ENCODE measurements at regions of chr4 and their contacts with region 1.

Region 1: DNA sequence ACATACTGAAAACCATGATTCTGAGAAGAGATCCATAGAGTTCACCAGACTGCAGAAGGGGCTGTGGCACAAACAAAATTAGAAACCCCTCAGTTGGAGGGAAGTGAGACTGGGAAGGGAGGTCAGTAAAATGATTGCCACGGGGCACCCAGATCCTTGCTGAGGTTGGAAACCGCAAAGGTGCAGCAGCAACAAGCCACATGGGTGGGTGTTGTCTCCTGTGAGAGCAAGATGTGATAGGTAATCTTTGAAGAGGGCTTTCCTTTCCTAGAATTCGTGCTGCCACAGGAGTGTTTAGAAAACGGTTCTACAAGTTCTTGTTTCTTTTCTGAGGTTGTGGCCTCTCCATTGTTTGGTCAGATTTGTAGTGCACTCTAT is 85.5 kb downstream of the NFKB1 start:
- DNase-seq: peak; percentile 69
- ATAC-seq: peak; percentile 82
- H3K4me3 Mint-ChIP-seq: peak overlapping the region; percentile 65
- H3K27ac Mint-ChIP-seq: peak overlapping the region; percentile 91
- H3K4me1 Mint-ChIP-seq: peaks cover 69% of the 10 kb centered on the region
- H3K27me3 Mint-ChIP-seq: no peaks in the 10 kb centered on the region

Region 2: DNA sequence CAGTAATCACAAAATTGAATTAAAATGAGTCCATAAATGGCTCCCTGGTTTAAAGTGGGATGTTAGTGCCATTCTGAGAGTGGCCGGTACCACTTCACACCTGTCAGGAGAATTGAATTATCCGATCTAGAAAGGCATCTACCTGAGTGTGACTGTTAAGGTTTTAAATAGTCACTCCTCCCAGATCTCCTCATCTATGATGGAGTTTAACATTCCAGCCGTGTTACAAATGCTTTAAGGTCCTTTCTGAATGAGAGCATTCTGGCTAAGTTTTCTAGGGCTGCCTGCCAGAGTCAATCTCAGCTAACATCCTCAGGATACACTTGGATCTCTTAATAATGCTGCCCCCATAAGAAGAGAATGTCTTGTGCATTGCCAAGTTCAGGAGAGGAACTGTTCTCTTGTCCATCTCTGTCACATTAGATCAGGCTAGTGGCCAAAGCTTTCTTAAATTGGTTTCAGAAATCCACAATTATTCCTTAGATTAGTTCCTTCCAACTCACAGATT is 472.5 kb before region 1 on chr4:
- POLR2A ChIA-PET with region 1: no interaction called
- DNase-seq: no peak
- ATAC-seq: no peak
- H3K4me3 Mint-ChIP-seq: no peak overlapping the region
- H3K27ac Mint-ChIP-seq: no peak overlapping the region
- H3K4me1 Mint-ChIP-seq: no peaks in the 10 kb centered on the region
- H3K27me3 Mint-ChIP-seq: peaks cover 4% of the 10 kb centered on the region

Region 3: GRCh38 chr4:102598086-102598761 is 11.6 kb after region 1 on chr4:
- POLR2A ChIA-PET with region 1: interaction called, 26 read pairs
- DNase-seq: no peak
- ATAC-seq: peak; percentile 90
- H3K4me3 Mint-ChIP-seq: peak overlapping the region; percentile 52
- H3K27ac Mint-ChIP-seq: peak overlapping the region; percentile 86
- H3K4me1 Mint-ChIP-seq: peaks cover 72% of the 10 kb centered on the region
- H3K27me3 Mint-ChIP-seq: no peaks in the 10 kb centered on the region